ENCODE measurements at regions of chr1 and their contacts with region 1.

Region 1: GRCh38 chr1:171636141-171636540 is 14.1 kb downstream of the MYOCOS start:
- DNase-seq: no peak
- H3K4me3 Mint-ChIP-seq: no peak overlapping the region
- H3K27ac Mint-ChIP-seq: no peak overlapping the region
- H3K4me1 Mint-ChIP-seq: no peaks in the 10 kb centered on the region
- H3K27me3 Mint-ChIP-seq: no peaks in the 10 kb centered on the region

Region 2: GRCh38 chr1:171127501-171127900 is 508.6 kb before region 1 on chr1:
- CTCF ChIA-PET with region 1: no interaction called
- POLR2A ChIA-PET with region 1: no interaction called
- DNase-seq: no peak
- H3K4me3 Mint-ChIP-seq: no peak overlapping the region
- H3K27ac Mint-ChIP-seq: no peak overlapping the region
- H3K4me1 Mint-ChIP-seq: no peaks in the 10 kb centered on the region
- H3K27me3 Mint-ChIP-seq: peaks cover 2% of the 10 kb centered on the region

Region 3: GRCh38 chr1:171622152-171622462 is 14.0 kb before region 1 on chr1 and contains the start of gene MYOCOS:
- CTCF ChIA-PET with region 1: interaction called, 10 read pairs
- POLR2A ChIA-PET with region 1: no interaction called
- DNase-seq: no peak
- H3K4me3 Mint-ChIP-seq: no peak within 1 kb of the TSS
- H3K27ac Mint-ChIP-seq: no peak within 1 kb of the TSS
- H3K4me1 Mint-ChIP-seq: no peaks in the 10 kb centered on the region
- H3K27me3 Mint-ChIP-seq: peaks cover 5% of the 10 kb centered on the region
- total RNA-seq, gene MYOCOS: 0.12 to 0.17 TPM

Measured in activated CD4-positive, alpha-beta T cell treated with anti-CD3 and anti-CD28 coated beads, Interleukin-2, amount 10 ng/mL, durations not matched to agents 7 days and 5 days (primary cell).